Activated B cell treated with CpG ODN at 0.5 μM for 24 hours (primary cell): ENCODE measurements at regions of chr11 and their contacts with region 1.

Region 1: GRCh38 chr11:73384872-73385689 is 8.9 kb downstream of the RELT start:
- DNase-seq: peak; percentile 82
- ATAC-seq: peak; percentile 63
- H3K4me3 Mint-ChIP-seq: peak overlapping the region; percentile 76
- H3K27ac Mint-ChIP-seq: peak overlapping the region; percentile 89
- H3K4me1 Mint-ChIP-seq: peaks cover 100% of the 10 kb centered on the region
- H3K27me3 Mint-ChIP-seq: no peaks in the 10 kb centered on the region
- CTCF ChIP-seq: no peak

Region 2: DNA sequence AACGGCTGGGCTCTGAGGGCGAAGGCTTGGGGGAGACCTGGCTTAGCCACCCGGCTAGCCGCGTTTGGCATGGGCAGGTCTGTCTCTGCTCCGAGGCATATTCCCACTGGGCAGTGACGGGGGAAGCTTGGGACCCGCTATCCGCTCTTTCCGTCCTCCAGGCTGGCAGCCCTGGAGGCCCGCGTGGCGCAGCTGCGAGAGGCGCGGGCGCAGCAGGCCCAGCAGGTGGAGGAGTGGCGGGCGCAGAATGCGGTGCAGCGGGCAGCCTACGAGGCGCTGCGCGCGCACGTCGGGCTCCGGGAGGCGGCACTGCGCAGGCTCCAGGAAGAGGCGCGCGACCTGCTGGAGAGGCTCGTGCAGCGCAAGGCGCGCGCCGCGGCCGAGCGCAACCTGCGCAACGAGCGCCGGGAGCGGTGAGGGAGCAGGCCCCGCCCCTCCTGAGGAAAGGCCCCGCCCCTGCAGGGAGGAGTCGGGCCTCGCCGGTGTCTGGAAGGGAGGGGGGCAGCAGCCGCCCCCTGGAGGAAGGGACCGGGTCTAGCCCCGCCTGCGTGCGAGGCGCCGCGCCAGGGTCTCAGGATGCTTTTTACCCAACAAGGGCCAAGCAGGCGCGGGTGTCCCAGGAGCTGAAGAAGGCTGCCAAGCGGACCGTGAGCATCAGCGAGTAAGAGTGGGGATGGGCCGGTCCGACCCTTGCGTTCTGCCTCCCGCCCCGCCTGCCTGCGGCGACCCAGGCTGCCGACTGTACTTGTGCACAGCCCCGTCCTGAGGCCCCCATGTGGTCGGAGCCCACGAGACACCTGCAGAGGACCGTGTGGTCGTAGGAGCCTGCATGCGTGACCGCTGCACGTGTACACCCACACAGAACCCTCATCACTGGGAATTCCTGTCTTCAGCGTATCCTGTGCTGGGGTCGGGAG is 562.9 kb before region 1 on chr11:
- CTCF ChIA-PET with region 1: no interaction called
- POLR2A ChIA-PET with region 1: interaction called, 10 read pairs
- intact Hi-C with region 1: loop called (anchors 10 kb)
- DNase-seq: peak; percentile 90
- ATAC-seq: peak; percentile 82
- H3K4me3 Mint-ChIP-seq: peak overlapping the region; percentile 63
- H3K27ac Mint-ChIP-seq: peak overlapping the region; percentile 95
- H3K4me1 Mint-ChIP-seq: peaks cover 57% of the 10 kb centered on the region
- H3K27me3 Mint-ChIP-seq: no peaks in the 10 kb centered on the region
- CTCF ChIP-seq: no peak

Region 3: DNA sequence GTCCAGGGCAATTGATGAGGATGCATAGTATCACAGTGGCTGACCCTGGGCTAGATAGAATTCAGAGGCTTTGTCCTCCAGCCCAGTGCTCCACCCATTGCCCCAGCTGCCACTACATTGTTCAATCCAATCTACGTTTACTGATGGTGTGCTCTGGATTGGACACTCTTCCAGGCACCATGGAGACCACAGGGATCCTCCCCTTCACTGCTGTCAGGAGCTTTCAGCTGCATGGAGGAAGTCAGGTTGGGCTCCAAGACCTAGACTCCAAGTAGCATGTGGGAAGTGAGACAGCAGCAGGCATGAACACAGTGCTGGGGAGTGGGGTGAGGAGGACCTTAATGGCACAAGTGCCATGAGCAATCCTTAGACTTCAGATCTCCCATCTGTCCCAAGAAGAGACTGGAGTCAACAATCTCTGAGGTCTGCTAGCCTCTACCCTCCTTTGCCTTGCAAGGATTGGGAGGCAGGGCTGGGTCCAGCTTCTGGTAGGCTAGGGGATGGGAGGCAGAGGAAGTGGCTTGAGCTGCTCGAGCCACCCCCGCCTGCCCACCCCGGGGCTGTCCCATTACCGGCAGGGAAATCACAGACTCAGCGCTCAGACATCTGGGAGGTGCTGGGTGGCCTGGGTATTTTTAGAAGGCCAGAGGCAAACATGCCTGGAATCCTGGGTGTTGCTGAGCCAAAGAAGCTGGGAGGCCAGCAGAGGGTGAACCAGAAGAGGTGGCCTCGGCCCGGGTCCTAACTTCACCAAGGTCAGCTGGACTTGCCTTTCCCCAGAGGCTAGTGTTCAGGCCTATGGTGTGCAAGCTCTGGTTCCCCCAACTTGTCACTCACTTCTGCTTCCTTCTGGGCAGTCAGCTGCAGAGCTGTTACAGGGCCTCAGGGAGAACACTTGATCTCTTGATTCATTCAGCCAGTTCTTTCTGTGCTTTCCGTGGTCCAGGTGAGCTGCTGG is 227.7 kb before region 1 on chr11:
- CTCF ChIA-PET with region 1: no interaction called
- POLR2A ChIA-PET with region 1: interaction called, 5 read pairs
- intact Hi-C with region 1: loop called (anchors 5 kb)
- DNase-seq: peak; percentile 51
- ATAC-seq: peak; percentile 51
- H3K4me3 Mint-ChIP-seq: peak overlapping the region; percentile 78
- H3K27ac Mint-ChIP-seq: peak overlapping the region; percentile 97
- H3K4me1 Mint-ChIP-seq: peaks cover 95% of the 10 kb centered on the region
- H3K27me3 Mint-ChIP-seq: no peaks in the 10 kb centered on the region
- CTCF ChIP-seq: no peak